Activated B cell treated with CpG ODN at 0.5 μM for 24 hours (primary cell): ENCODE measurements at regions of chr20 and their contacts with region 1.

Region 1: GRCh38 chr20:18287915-18288748 is at the start of gene ZNF133:
- DNase-seq: peak; percentile 99
- ATAC-seq: peak; percentile 96
- H3K4me3 Mint-ChIP-seq: peak within 1 kb of the TSS; percentile 92
- H3K27ac Mint-ChIP-seq: peak within 1 kb of the TSS; percentile 97
- H3K4me1 Mint-ChIP-seq: peaks cover 29% of the 10 kb centered on the region
- H3K27me3 Mint-ChIP-seq: peaks cover 16% of the 10 kb centered on the region
- CTCF ChIP-seq: no peak
- total RNA-seq, gene ZNF133: 7.7 and 8.0 TPM in 2 replicates

Region 2: DNA sequence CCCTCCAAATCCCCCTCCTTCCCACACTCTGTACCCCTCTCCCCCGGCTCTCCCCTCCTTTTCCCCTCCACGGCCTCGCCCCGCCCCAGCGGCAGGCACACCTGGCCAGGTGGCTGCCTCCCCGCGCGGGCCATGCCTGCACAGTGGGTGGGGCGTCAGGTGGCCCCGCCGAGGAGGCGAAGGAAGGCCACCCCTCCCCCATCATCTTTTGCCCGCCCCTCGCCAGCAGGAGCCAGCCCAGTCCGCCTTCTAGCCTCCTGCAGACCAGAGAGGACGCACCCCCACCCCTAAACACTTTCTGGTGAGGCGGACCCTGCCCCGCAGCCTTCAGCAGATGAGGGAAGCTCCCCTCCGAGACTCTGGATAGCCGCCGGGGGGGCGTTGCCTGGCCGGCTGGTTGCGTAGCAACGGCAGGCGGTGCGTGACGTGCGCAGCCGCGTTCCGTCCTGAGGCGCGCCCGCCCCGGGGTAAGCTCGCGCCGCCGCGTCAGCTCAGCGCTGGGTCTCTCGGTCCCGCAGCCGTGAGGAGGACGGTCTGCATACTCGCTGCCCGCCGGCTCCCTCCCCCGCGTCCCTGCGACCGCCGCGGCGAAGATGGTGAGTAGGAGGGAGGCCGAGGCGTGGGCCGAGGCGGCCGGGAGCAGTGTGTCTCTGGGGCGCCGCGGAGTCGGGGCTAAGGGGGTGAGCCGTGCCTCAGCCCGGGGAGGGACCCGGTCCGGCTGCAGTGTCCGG is 718.4 kb before region 1 on chr20 and contains the start of gene DSTN:
- CTCF ChIA-PET with region 1: interaction called, 3 read pairs
- POLR2A ChIA-PET with region 1: interaction called, 12 read pairs
- intact Hi-C with region 1: loop called (anchors 2 kb)
- DNase-seq: peak; percentile 88
- ATAC-seq: peak; percentile 89
- H3K4me3 Mint-ChIP-seq: peak within 1 kb of the TSS; percentile 93
- H3K27ac Mint-ChIP-seq: peak within 1 kb of the TSS; percentile 85
- H3K4me1 Mint-ChIP-seq: peaks cover 16% of the 10 kb centered on the region
- H3K27me3 Mint-ChIP-seq: peaks cover 2% of the 10 kb centered on the region
- CTCF ChIP-seq: no peak
- total RNA-seq, gene DSTN: 14.4 and 20.1 TPM in 2 replicates

Region 3: DNA sequence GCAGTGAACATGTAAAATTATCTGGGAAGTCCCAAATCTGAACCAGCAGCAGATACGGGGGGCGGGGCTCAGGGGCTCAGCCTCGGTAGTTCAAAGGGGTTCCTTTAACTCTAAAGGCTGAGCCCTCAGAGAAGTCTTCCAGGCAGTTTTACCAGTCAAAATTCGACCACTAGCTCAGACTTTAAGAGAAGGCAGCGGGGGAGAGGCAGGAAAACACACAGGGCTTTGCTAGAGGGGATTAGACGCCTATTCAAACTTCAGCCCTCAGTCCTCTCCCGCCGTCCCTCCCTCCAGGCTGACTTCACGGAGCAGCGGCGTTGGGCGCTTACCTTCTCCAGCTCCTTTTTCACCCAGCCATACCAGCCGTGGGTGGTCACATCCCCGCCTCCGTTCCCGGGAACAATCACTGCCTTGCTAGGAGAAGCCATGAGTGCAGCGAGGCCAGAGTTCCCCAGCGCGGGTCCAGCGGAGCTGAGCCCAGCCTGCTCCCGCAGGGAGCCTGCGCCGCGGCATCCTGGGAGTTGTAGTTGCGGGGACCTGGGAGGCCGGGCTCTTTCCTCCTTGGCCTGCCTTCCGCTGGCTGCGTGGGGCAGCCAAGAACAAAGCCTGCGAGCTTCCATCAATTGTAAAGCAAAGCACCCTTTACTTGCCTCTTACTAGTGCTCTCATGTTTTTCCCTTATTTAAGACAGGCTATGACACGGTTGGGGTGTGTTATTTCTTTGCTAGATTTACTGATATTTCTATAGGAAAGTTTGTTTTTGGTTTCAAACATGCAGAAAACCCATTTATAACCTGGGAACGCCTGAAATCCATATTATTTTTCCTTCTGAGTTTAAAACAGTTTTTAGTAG is 208.8 kb after region 1 on chr20 and contains the start of gene RBBP9:
- CTCF ChIA-PET with region 1: no interaction called
- POLR2A ChIA-PET with region 1: interaction called, 7 read pairs
- intact Hi-C with region 1: loop called (anchors 1 kb)
- DNase-seq: peak; percentile 67
- ATAC-seq: peak; percentile 99
- H3K4me3 Mint-ChIP-seq: peak within 1 kb of the TSS; percentile 99
- H3K27ac Mint-ChIP-seq: peak within 1 kb of the TSS; percentile 87
- H3K4me1 Mint-ChIP-seq: peaks cover 16% of the 10 kb centered on the region
- H3K27me3 Mint-ChIP-seq: peaks cover 3% of the 10 kb centered on the region
- CTCF ChIP-seq: no peak
- total RNA-seq, gene RBBP9: 10.6 TPM in 2 replicates

Region 4: DNA sequence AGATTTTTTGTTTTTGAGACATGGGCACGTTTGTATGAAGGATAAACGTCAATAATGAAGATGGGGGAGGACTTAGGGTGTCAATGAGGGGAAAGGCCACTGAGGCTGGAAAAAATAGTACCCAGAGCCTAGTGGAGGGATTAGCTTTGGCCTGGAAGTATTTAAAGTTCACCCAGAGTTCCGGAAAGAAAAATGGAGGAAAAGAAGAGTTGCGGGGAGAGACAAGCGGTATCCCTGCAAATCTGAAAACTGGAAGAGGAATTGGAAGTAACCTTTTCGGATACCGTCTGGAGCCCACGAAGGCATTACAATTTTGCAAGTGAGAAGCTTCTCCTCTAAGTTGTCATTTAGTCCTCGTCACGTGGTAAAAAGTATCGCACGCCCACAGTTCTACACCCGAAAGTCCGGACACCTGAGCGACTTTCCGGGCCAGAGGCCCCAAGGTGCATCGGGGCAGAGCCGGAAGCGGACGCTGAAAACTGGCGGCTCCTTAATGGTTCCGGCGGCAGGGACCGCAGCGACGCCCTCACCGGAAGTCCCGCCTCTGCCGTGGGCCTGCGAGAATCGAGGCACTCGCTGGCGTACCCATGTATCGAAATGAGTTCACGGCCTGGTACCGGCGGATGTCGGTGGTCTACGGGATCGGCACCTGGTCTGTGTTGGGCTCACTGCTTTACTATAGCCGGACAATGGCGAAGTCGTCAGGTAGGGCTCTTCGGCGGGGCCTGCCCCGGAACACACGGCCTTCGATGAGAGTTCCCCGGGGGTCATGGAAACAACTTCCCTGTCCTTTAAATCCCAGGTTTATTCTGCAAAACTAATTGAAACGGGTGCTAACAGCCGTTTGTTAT is 279.0 kb after region 1 on chr20 and contains the start of gene SMIM26:
- CTCF ChIA-PET with region 1: no interaction called
- POLR2A ChIA-PET with region 1: interaction called, 3 read pairs
- intact Hi-C with region 1: loop called (anchors 1 kb)
- DNase-seq: peak; percentile 91
- ATAC-seq: peak; percentile 96
- H3K4me3 Mint-ChIP-seq: peak within 1 kb of the TSS; percentile 94
- H3K27ac Mint-ChIP-seq: peak within 1 kb of the TSS; percentile 94
- H3K4me1 Mint-ChIP-seq: peaks cover 23% of the 10 kb centered on the region
- H3K27me3 Mint-ChIP-seq: no peaks in the 10 kb centered on the region
- CTCF ChIP-seq: no peak
- total RNA-seq, gene SMIM26: 48.9 and 51.7 TPM in 2 replicates

Region 5: GRCh38 chr20:19661717-19662636 is 1373.8 kb after region 1 on chr20:
- CTCF ChIA-PET with region 1: no interaction called
- POLR2A ChIA-PET with region 1: no interaction called
- intact Hi-C with region 1: loop called (anchors 1 kb)
- DNase-seq: peak; percentile 28
- ATAC-seq: peak; percentile 38
- H3K4me3 Mint-ChIP-seq: no peak overlapping the region
- H3K27ac Mint-ChIP-seq: no peak overlapping the region
- H3K4me1 Mint-ChIP-seq: peaks cover 32% of the 10 kb centered on the region
- H3K27me3 Mint-ChIP-seq: peaks cover 21% of the 10 kb centered on the region
- CTCF ChIP-seq: peak; percentile 99